ENCODE measurements at regions of chr16 and their contacts with region 1.

Region 1: DNA sequence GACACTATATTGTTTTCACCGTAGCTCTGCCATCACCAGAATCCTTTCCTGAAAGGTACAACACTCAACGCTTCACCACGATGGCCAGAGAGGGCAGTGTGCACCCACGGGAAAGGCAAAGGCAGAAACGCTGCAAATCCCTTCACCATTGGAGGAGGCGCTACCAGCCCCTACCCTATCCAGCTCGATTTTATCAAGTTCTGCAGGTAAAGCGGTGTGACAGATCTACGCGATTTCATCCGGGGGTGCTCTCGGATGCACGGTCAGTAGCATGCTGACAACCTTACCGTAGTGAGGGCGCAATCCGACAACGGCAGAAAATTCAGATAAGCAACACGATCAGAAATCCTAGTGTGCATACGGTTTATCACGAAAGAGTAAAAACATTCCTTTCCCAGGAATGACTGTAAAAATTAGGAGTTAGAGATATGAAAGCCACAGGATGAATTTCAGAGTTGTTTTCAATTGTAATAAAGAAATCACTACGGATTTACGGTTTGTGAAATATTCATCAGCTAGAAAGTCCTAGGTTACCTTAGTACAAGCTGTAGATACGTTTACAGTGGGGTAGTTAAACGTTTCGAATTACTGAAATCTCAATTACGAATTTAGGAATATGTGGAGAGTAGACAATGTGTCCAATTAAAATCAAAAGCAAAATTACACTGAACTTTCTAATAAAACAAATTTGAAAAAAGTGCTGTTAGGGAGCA is 1.8 kb downstream of the NETO2 start:
- DNase-seq: peak; percentile 83
- ATAC-seq: peak; percentile 59
- H3K4me3 ChIP-seq: peak overlapping the region; percentile 62
- H3K27ac ChIP-seq: no peak overlapping the region
- H3K4me1 ChIP-seq: no peaks in the 10 kb centered on the region
- H3K27me3 ChIP-seq: no peaks in the 10 kb centered on the region
- CTCF ChIP-seq: peak; percentile 95
- POLR2A ChIP-seq: 0 out of 2 replicates have a peak, but pooled peaks have one; percentile 33
- RAD21 ChIP-seq: peak; percentile 94

Region 2: GRCh38 chr16:46947900-46948547 is 193.9 kb before region 1 on chr16:
- CTCF ChIA-PET with region 1: interaction called, 4 read pairs
- POLR2A ChIA-PET with region 1: no interaction called
- dilution Hi-C with region 1: no loop called
- in situ Hi-C with region 1: no loop called
- intact Hi-C with region 1: loop called (anchors 2 kb)
- DNase-seq: peak; percentile 49
- ATAC-seq: peak; percentile 87
- H3K4me3 ChIP-seq: no peak overlapping the region
- H3K27ac ChIP-seq: no peak overlapping the region
- H3K4me1 ChIP-seq: no peaks in the 10 kb centered on the region
- H3K27me3 ChIP-seq: no peaks in the 10 kb centered on the region
- CTCF ChIP-seq: peak; percentile 67
- POLR2A ChIP-seq: no peak
- RAD21 ChIP-seq: peak; percentile 73

Region 3: DNA sequence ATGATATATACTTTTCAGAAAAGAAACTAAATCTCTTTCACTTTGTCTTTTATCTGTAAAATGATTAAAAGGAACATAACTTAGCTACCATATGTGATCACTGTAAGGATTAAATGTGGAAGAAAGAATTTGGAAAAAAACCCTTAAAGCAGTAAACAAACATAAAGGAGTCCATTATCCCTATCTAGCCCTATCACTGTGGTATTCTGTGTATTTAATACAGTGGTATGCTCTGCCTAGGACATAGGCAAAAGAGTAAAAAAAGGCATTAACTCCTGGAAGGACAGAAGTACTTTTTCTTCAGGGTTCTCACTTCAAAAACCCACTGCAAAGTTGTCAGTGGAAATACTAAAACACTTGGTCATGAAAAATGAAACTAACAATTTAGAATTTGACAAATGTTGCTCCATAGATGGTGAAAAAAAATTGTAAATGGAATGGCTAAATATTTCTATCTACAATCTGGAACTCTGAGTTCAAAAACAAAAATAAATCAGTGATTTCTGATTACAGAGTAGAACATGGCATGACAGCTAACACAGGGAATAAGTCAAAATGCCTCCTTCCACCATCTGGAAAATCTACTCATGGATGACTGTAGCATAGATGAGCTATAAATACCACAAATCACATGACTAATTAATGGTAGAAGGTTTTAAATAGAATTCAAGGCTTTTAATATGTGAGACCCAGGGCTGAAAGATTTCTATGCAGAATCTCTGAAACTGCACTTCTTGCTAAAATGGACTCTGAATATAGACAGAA is 178.8 kb after region 1 on chr16:
- CTCF ChIA-PET with region 1: no interaction called
- POLR2A ChIA-PET with region 1: no interaction called
- dilution Hi-C with region 1: no loop called
- in situ Hi-C with region 1: no loop called
- intact Hi-C with region 1: no loop called
- DNase-seq: peak; percentile 65
- ATAC-seq: peak; percentile 73
- H3K4me3 ChIP-seq: no peak overlapping the region
- H3K27ac ChIP-seq: no peak overlapping the region
- H3K4me1 ChIP-seq: no peaks in the 10 kb centered on the region
- H3K27me3 ChIP-seq: no peaks in the 10 kb centered on the region
- CTCF ChIP-seq: no peak
- POLR2A ChIP-seq: no peak
- RAD21 ChIP-seq: no peak

Region 4: GRCh38 chr16:47448830-47449575 is 307.1 kb after region 1 on chr16:
- CTCF ChIA-PET with region 1: interaction called, 3 read pairs
- POLR2A ChIA-PET with region 1: no interaction called
- dilution Hi-C with region 1: no loop called
- in situ Hi-C with region 1: no loop called
- intact Hi-C with region 1: loop called (anchors 5 kb)
- DNase-seq: no peak
- ATAC-seq: no peak
- H3K4me3 ChIP-seq: no peak overlapping the region
- H3K27ac ChIP-seq: no peak overlapping the region
- H3K4me1 ChIP-seq: peaks cover 2% of the 10 kb centered on the region
- H3K27me3 ChIP-seq: no peaks in the 10 kb centered on the region
- CTCF ChIP-seq: no peak
- POLR2A ChIP-seq: no peak
- RAD21 ChIP-seq: no peak

Region 5: GRCh38 chr16:48054881-48055601 is 913.1 kb after region 1 on chr16:
- CTCF ChIA-PET with region 1: interaction called, 13 read pairs
- POLR2A ChIA-PET with region 1: no interaction called
- dilution Hi-C with region 1: no loop called
- in situ Hi-C with region 1: no loop called
- intact Hi-C with region 1: loop called (anchors 1 kb)
- DNase-seq: peak; percentile 71
- ATAC-seq: peak; percentile 83
- H3K4me3 ChIP-seq: no peak overlapping the region
- H3K27ac ChIP-seq: no peak overlapping the region
- H3K4me1 ChIP-seq: peaks cover 6% of the 10 kb centered on the region
- H3K27me3 ChIP-seq: no peaks in the 10 kb centered on the region
- CTCF ChIP-seq: peak; percentile 91
- POLR2A ChIP-seq: no peak
- RAD21 ChIP-seq: peak; percentile 88

Region 6: DNA sequence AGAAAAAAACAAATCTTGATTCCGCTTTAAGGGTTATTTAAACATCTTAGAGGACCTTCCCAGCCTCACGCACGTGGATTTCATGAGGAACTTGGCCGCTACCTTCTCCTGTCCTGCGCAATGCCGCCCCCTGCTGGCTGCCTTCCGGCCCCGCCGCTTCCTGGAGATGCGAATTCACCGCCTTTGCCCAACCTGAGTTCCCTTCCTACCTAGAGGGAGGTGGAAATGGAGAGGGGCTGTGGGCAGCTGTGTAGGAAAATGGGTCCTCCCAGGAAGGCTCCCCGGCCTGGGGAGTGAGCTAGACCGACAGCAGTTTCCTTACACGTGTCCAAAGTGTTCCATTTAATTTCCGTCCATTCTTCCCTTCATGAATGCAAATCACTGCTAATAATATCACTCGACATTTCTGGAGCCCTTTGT is 1014.9 kb after region 1 on chr16:
- CTCF ChIA-PET with region 1: interaction called, 11 read pairs
- POLR2A ChIA-PET with region 1: no interaction called
- dilution Hi-C with region 1: no loop called
- in situ Hi-C with region 1: loop called (anchors 5 kb)
- intact Hi-C with region 1: loop called (anchors 1 kb)
- DNase-seq: peak; percentile 85
- ATAC-seq: peak; percentile 85
- H3K4me3 ChIP-seq: no peak overlapping the region
- H3K27ac ChIP-seq: no peak overlapping the region
- H3K4me1 ChIP-seq: peaks cover 2% of the 10 kb centered on the region
- H3K27me3 ChIP-seq: no peaks in the 10 kb centered on the region
- CTCF ChIP-seq: peak; percentile 96
- POLR2A ChIP-seq: peak; percentile 50; the same call in 1 of the 2 replicates
- RAD21 ChIP-seq: peak; percentile 98

Region 7: GRCh38 chr16:48632137-48632774 is 1490.3 kb after region 1 on chr16:
- CTCF ChIA-PET with region 1: no interaction called
- POLR2A ChIA-PET with region 1: no interaction called
- dilution Hi-C with region 1: no loop called
- in situ Hi-C with region 1: no loop called
- intact Hi-C with region 1: loop called (anchors 5 kb)
- DNase-seq: no peak
- ATAC-seq: no peak
- H3K4me3 ChIP-seq: no peak overlapping the region
- H3K27ac ChIP-seq: no peak overlapping the region
- H3K4me1 ChIP-seq: peaks cover 2% of the 10 kb centered on the region; the same call in 1 of the 2 replicates
- H3K27me3 ChIP-seq: peaks cover 4% of the 10 kb centered on the region; the same call in 1 of the 2 replicates
- CTCF ChIP-seq: no peak
- POLR2A ChIP-seq: no peak
- RAD21 ChIP-seq: no peak

Measured in IMR-90 (cell line).